Thyroid gland (tissue), 4 donors: ENCODE measurements at regions of chr2 and their contacts with region 1.

Region 1: GRCh38 chr2:200483729-200484198 is 26.1 kb downstream of the KCTD18 start:
- DNase-seq: peak; percentile 43 to 60
- H3K4me3 ChIP-seq: no peak overlapping the region
- H3K27ac ChIP-seq: no peak overlapping the region
- H3K4me1 ChIP-seq: no peaks in the 10 kb centered on the region
- H3K27me3 ChIP-seq: no peaks in the 10 kb centered on the region
- CTCF ChIP-seq: peak in 3 of 6 experiments; percentile 36 to 48 (median 38)
- POLR2A ChIP-seq: no peak

Region 2: GRCh38 chr2:199979832-199980628 is 503.7 kb before region 1 on chr2:
- intact Hi-C with region 1: loop called (anchors 5 kb)
- DNase-seq: peak; percentile 84 to 88
- H3K4me3 ChIP-seq: no peak overlapping the region
- H3K27ac ChIP-seq: no peak overlapping the region
- H3K4me1 ChIP-seq: peaks cover 0 to 4% of the 10 kb centered on the region in 2 donors
- H3K27me3 ChIP-seq: no peaks in the 10 kb centered on the region
- CTCF ChIP-seq: peak; percentile 61 to 85 (median 79)
- POLR2A ChIP-seq: no peak

Region 3: GRCh38 chr2:201007561-201007998 is 523.8 kb after region 1 on chr2:
- intact Hi-C with region 1: no loop called
- DNase-seq: no peak
- H3K4me3 ChIP-seq: no peak overlapping the region
- H3K27ac ChIP-seq: no peak overlapping the region
- H3K4me1 ChIP-seq: no peaks in the 10 kb centered on the region
- H3K27me3 ChIP-seq: no peaks in the 10 kb centered on the region
- CTCF ChIP-seq: no peak
- POLR2A ChIP-seq: no peak